Naive thymus-derived CD4-positive, alpha-beta T cell (primary cell): ENCODE measurements at regions of chr16 and their contacts with region 1.

Region 1: DNA sequence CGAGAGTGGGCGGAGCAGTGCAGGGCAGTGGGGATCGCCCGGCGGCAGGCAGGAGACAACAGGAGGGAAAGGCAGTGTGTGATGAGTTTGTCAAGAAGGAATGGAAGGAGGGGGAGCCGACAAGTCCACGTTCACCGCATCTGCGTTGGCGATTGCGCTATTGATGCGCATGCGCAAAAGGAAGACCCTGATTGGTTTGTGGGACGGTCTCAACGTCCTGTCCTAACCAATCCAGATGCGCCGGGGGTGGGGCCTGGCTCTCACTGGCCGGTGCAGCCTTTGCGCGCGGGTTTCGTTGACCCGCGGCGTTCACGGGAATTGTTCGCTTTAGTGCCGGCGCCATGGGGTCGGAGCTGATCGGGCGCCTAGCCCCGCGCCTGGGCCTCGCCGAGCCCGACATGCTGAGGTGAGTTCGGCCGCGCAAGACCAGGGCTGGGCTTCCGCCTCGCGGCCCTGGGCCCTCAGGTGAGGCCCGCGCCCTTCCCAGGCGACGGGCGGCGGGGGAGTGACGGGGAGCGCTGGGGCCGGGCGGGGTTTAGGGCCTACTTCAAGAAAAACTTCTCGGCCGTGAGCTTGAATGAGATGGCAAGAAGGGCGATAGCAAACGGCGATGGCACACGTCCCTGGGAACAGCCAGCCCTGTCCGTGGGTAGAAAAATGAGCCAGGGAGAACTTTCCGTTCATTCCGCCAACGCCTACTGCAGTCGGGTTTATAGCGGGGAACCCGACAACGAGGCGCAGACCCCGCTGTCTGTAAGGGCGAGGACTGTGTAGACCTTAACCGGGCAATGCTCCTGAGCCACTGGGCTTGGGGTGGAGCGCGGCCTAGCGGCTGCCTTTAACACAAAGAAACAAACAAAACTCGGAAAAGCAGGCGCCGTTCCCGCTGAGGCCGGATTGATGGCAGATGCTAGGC is at the start of gene ORC6:
- DNase-seq: peak; percentile 90 to 99 (median 97)
- ATAC-seq: peak; percentile 85
- H3K4me3 ChIP-seq: peak within 1 kb of the TSS; percentile 99
- H3K4me3 Mint-ChIP-seq: no peak within 1 kb of the TSS
- H3K27ac ChIP-seq: peak within 1 kb of the TSS; percentile 94
- H3K27ac Mint-ChIP-seq: no peak within 1 kb of the TSS
- H3K4me1 ChIP-seq: peaks cover 16 to 22% of the 10 kb centered on the region in 2 donors
- H3K4me1 Mint-ChIP-seq: peaks cover 25 to 48% (median 36%) of the 10 kb centered on the region in 7 donors
- H3K27me3 ChIP-seq: no peaks in the 10 kb centered on the region
- H3K27me3 Mint-ChIP-seq: no peaks in the 10 kb centered on the region
- total RNA-seq, gene ORC6: 2.7 to 27.3 (median 5.1) TPM

Region 2: DNA sequence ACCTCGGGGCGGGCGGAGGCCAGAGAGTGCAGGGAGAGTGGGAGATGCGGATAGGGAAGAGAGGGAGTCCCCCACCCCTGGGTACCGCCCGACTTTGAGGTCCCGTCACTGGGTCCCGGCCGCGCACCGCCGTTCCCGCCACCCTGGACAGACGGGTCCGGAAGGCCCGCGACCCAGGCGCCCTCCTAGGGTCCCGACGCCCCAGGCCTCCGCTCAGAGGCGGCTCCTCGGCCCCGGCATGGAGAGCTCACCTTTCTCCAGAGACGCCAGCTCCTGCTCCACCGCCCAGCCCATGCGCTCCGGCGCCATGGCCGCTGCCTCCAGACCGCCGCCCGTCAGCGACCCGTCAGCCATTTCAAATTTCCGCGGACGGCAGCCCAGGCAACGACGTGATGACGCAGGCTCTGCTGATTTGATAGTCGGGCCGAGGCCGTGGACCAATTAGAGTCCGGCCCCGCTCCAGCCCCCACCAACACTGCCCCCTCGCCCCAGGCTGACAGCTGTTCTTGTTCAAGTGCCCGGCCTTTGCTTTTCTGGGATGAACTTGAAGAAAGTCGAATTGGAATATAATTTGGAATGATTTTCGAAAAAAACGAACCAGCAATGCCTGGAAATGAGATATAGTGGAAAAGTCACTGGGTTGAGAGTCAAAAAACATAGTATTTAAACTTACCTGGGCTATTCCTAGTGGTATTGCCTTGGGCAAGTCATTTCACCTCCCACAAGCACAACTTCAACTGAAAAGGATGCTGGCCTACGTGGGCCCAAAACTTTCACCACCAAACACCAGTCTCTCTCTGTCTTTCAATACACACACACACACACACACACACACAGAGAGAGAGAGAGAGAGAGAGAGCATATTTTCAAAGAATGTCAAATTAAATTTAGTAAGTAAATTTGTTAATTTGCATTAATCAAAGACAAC is 68.4 kb before region 1 on chr16 and contains the start of gene SHCBP1:
- CTCF ChIA-PET with region 1: no interaction called
- POLR2A ChIA-PET with region 1: no interaction called
- intact Hi-C with region 1: loop called in 1 of 2 experiments (anchors 2 kb)
- DNase-seq: peak; percentile 10 to 82 (median 34)
- ATAC-seq: peak; percentile 87
- H3K4me3 ChIP-seq: peak within 1 kb of the TSS; percentile 62
- H3K4me3 Mint-ChIP-seq: peak within 1 kb of the TSS; percentile 83 to 98 (median 88)
- H3K27ac ChIP-seq: no peak within 1 kb of the TSS
- H3K27ac Mint-ChIP-seq: peak within 1 kb of the TSS in 6 of 9 donors; percentile 8 to 98 (median 56)
- H3K4me1 ChIP-seq: peaks cover 3% of the 10 kb centered on the region in 2 donors
- H3K4me1 Mint-ChIP-seq: peaks cover 13 to 34% (median 22%) of the 10 kb centered on the region in 7 donors
- H3K27me3 ChIP-seq: no peaks in the 10 kb centered on the region
- H3K27me3 Mint-ChIP-seq: peaks cover 0 to 13% (median 0%) of the 10 kb centered on the region in 5 donors
- total RNA-seq, gene SHCBP1: 0.32 to 37.8 (median 1.1) TPM

Region 3: GRCh38 chr16:46830902-46831647 is 141.5 kb after region 1 on chr16 and contains the start of gene C16orf87:
- CTCF ChIA-PET with region 1: no interaction called
- POLR2A ChIA-PET with region 1: interaction called, 5 read pairs
- intact Hi-C with region 1: loop called (anchors 1 kb)
- DNase-seq: peak; percentile 88 to 95 (median 91)
- ATAC-seq: peak; percentile 96
- H3K4me3 ChIP-seq: peak within 1 kb of the TSS; percentile 46
- H3K4me3 Mint-ChIP-seq: peak within 1 kb of the TSS; percentile 94 to 99 (median 96)
- H3K27ac ChIP-seq: peak within 1 kb of the TSS; percentile 81
- H3K27ac Mint-ChIP-seq: peak within 1 kb of the TSS; percentile 90 to 98 (median 95)
- H3K4me1 ChIP-seq: peaks cover 9 to 12% of the 10 kb centered on the region in 2 donors
- H3K4me1 Mint-ChIP-seq: peaks cover 21 to 35% (median 29%) of the 10 kb centered on the region in 7 donors
- H3K27me3 ChIP-seq: no peaks in the 10 kb centered on the region
- H3K27me3 Mint-ChIP-seq: peaks cover 0 to 21% (median 0%) of the 10 kb centered on the region in 5 donors
- total RNA-seq, gene C16orf87: 5.6 to 14.0 (median 12.7) TPM

Region 4: DNA sequence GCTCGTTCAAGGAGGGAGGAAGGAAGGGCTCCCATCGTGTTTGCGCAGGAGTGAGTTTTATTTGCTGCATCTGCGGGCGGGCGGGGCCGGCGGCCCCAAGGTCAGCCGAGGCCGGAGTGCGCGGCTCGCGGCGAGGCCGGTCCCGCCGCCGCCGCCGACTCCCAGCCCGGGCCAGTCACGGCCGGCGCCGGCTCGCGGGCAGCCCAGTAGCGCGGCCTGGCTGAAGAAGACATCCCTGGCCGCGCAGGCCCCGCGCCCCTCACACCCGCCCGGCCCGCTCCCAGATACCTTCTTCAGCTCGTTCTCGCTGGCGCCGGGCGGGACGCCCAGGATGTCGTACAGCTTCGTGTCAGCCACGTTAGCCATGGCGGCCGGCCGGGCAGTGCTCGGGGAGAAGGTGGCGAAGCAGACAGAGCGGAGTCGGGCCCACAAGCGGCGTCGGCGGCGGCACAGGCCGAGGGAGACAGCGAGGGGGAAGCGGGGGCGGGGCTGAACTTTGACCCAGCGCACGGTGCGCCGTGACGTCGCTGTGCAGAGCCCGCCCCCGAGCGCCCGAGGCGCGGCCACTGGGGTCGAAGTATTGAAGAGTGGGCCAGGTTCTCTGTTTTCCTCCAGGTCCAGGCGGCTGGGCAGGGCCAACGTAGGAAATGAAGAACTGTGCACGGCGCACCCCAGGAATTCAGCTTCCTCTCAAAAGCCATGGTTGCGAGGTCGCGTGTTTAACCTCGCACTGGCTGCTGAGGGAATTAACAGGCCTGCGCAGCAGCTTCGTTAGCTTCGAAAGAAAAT is 283.8 kb after region 1 on chr16 and contains the start of gene DNAJA2:
- CTCF ChIA-PET with region 1: no interaction called
- POLR2A ChIA-PET with region 1: interaction called, 4 read pairs
- intact Hi-C with region 1: loop called (anchors 1 kb)
- DNase-seq: peak; percentile 86 to 95 (median 92)
- ATAC-seq: peak; percentile 98
- H3K4me3 ChIP-seq: peak within 1 kb of the TSS; percentile 81
- H3K4me3 Mint-ChIP-seq: peak within 1 kb of the TSS; percentile 88 to 98 (median 95)
- H3K27ac ChIP-seq: peak within 1 kb of the TSS; percentile 93
- H3K27ac Mint-ChIP-seq: peak within 1 kb of the TSS; percentile 87 to 100 (median 99)
- H3K4me1 ChIP-seq: peaks cover 26 to 33% of the 10 kb centered on the region in 2 donors
- H3K4me1 Mint-ChIP-seq: peaks cover 27 to 70% (median 51%) of the 10 kb centered on the region in 7 donors
- H3K27me3 ChIP-seq: no peaks in the 10 kb centered on the region
- H3K27me3 Mint-ChIP-seq: no peaks in the 10 kb centered on the region
- total RNA-seq, gene DNAJA2: 59.4 to 73.3 (median 60.9) TPM

Region 5: DNA sequence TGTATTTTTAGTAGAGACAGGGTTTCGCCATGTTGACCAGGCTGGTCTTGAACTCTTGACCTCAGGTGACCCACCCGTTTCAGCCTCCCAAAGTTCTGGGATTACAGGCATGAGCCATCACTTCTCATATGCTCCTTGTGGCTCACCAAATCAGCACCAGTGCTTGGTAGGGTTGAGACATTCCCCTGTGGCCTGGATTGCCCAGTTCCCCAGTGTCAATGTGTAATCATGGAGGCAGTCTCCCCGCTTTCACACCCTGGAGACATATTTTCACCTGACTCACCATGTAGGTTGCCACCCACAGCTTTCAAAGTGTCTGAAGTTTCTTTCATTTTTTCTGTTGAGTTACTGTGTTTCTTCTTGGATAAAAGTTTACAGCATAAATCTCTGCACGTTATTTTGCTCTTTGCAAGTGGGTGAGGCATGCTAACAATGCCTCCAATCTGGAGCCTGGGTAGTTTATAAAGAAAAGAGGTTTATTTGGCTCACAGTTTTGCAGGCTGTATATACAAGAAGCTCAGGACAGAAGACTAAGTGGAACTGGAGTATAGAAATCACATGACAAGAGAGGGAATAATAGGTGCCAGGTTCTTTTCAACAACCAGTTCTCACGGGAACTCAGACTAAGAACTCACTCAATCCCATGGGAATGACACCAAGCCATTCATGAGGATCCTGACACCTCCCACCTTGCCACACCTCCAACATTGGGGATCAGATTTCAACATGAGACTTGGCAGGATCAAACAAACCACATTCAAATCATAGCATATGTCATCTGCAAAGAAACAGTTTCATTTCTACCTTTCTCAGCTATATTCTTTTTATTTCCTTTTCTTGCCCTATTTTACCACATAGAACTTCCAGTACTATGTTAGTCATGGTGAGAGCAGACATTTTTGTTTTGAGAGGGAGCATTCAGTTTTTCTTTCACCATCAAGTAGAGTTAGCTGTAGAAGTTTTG is 884.8 kb after region 1 on chr16:
- CTCF ChIA-PET with region 1: no interaction called
- POLR2A ChIA-PET with region 1: no interaction called
- intact Hi-C with region 1: loop called in 1 of 2 experiments (anchors 5 kb)
- DNase-seq: peak in 1 of 9 donors; percentile 34
- ATAC-seq: peak; percentile 32
- H3K4me3 ChIP-seq: peak overlapping the region; percentile 8
- H3K4me3 Mint-ChIP-seq: peak overlapping the region in 6 of 10 donors; percentile 4 to 64 (median 34)
- H3K27ac ChIP-seq: no peak overlapping the region
- H3K27ac Mint-ChIP-seq: peak overlapping the region in 6 of 9 donors; percentile 41 to 88 (median 62)
- H3K4me1 ChIP-seq: peaks cover 8 to 23% of the 10 kb centered on the region in 2 donors
- H3K4me1 Mint-ChIP-seq: peaks cover 30 to 53% (median 37%) of the 10 kb centered on the region in 7 donors
- H3K27me3 ChIP-seq: no peaks in the 10 kb centered on the region
- H3K27me3 Mint-ChIP-seq: no peaks in the 10 kb centered on the region

Region 6: GRCh38 chr16:48385272-48386150 is 1695.9 kb after region 1 on chr16 and contains the start of gene SIAH1:
- CTCF ChIA-PET with region 1: no interaction called
- POLR2A ChIA-PET with region 1: no interaction called
- intact Hi-C with region 1: loop called (anchors 2 to 10 kb)
- DNase-seq: peak; percentile 79 to 95 (median 89)
- ATAC-seq: peak; percentile 95
- H3K4me3 ChIP-seq: peak within 1 kb of the TSS; percentile 88
- H3K4me3 Mint-ChIP-seq: peak within 1 kb of the TSS; percentile 90 to 98 (median 94)
- H3K27ac ChIP-seq: peak within 1 kb of the TSS; percentile 94
- H3K27ac Mint-ChIP-seq: peak within 1 kb of the TSS; percentile 80 to 97 (median 94)
- H3K4me1 ChIP-seq: peaks cover 12 to 16% of the 10 kb centered on the region in 2 donors
- H3K4me1 Mint-ChIP-seq: peaks cover 18 to 39% (median 31%) of the 10 kb centered on the region in 7 donors
- H3K27me3 ChIP-seq: no peaks in the 10 kb centered on the region
- H3K27me3 Mint-ChIP-seq: peaks cover 0 to 5% (median 0%) of the 10 kb centered on the region in 5 donors
- total RNA-seq, gene SIAH1: 14.5 to 51.1 (median 19.8) TPM